Activated CD8-positive, alpha-beta T cell treated with anti-CD3 and anti-CD28 coated beads, Interleukin-2, amount 10 ng/mL, durations not matched to agents 7 days and 5 days (primary cell): ENCODE measurements at regions of chr3 and their contacts with region 1.

Region 1: GRCh38 chr3:170357176-170357919 is at the start of gene SKIL:
- DNase-seq: peak; percentile 94
- ATAC-seq: peak; percentile 84
- H3K4me3 Mint-ChIP-seq: peak within 1 kb of the TSS; percentile 83
- H3K27ac Mint-ChIP-seq: peak within 1 kb of the TSS; percentile 92
- H3K4me1 Mint-ChIP-seq: peaks cover 36% of the 10 kb centered on the region
- H3K27me3 Mint-ChIP-seq: peaks cover 14% of the 10 kb centered on the region
- total RNA-seq, gene SKIL: 6.7 to 6.9 TPM

Region 2: GRCh38 chr3:169772897-169773828 is 584.2 kb before region 1 on chr3 and contains the start of gene MYNN:
- CTCF ChIA-PET with region 1: no interaction called
- POLR2A ChIA-PET with region 1: interaction called, 15 read pairs
- DNase-seq: peak; percentile 95
- ATAC-seq: peak; percentile 82
- H3K4me3 Mint-ChIP-seq: peak within 1 kb of the TSS; percentile 98
- H3K27ac Mint-ChIP-seq: peak within 1 kb of the TSS; percentile 100
- H3K4me1 Mint-ChIP-seq: peaks cover 42% of the 10 kb centered on the region
- H3K27me3 Mint-ChIP-seq: no peaks in the 10 kb centered on the region
- total RNA-seq, gene MYNN: 15.7 to 16.4 TPM

Region 3: DNA sequence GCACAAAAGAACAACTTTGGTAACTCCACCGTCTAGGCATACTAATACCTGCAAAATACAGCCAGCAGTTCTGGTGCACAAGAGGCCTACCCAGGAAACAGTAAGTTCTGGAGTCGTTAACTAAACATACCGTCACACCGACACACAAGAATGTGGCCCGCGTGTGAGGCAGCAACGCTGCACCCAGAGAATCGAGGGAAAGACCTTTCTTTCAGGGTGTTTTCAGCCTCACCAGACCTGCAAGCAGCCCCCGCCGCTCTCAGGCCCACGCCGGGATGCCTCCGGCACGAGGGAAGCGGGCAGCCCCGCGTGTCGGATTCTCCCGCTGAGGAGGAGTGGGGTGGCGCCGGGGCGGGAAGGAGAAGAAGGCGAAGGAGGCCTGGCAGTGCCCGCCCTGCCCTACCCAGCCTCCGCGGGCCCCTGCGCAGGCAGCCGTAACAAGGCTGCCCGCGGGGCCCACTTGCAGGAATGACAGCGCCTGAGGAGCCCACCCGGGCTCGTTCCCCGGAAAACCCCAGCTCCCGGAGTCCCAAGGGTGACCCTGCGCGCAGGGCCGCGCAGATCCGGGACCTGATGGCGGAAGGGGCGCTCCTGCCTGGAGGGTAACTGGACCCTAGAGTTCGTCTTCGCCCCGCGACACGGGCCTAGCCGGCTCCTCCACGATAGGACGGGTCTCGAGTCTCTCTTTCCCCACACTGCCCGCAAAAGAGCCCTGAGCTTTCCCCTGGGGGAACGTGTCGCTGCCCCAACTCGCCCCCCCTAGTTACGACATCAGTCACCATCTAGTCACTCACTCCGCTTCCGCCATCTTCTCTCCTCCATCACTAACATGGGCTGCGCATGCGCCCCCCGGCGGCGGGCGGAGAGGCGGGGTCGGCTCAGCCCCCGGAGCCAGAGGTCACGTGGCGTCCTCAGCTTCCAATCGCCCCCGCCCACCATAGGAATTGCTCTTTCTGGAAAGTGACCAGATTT is 176.2 kb before region 1 on chr3 and contains the start of gene PHC3:
- CTCF ChIA-PET with region 1: no interaction called
- POLR2A ChIA-PET with region 1: interaction called, 16 read pairs
- DNase-seq: peak; percentile 94
- ATAC-seq: peak; percentile 76
- H3K4me3 Mint-ChIP-seq: peak within 1 kb of the TSS; percentile 98
- H3K27ac Mint-ChIP-seq: peak within 1 kb of the TSS; percentile 100
- H3K4me1 Mint-ChIP-seq: peaks cover 30% of the 10 kb centered on the region
- H3K27me3 Mint-ChIP-seq: no peaks in the 10 kb centered on the region
- total RNA-seq, gene PHC3: 54.0 to 68.1 TPM

Region 4: GRCh38 chr3:170317954-170318353 is 39.4 kb before region 1 on chr3:
- CTCF ChIA-PET with region 1: no interaction called
- POLR2A ChIA-PET with region 1: no interaction called
- DNase-seq: no peak
- ATAC-seq: no peak
- H3K4me3 Mint-ChIP-seq: no peak overlapping the region
- H3K27ac Mint-ChIP-seq: no peak overlapping the region
- H3K4me1 Mint-ChIP-seq: no peaks in the 10 kb centered on the region
- H3K27me3 Mint-ChIP-seq: peaks cover 5% of the 10 kb centered on the region